ENCODE measurements at regions of chr17 and their contacts with region 1.

Region 1: GRCh38 chr17:38667099-38667786 is 7.5 kb downstream of the EPOP start:
- DNase-seq: peak; percentile 77 to 82 (median 78)
- ATAC-seq: peak; percentile 82
- H3K4me3 ChIP-seq: no peak overlapping the region
- H3K27ac ChIP-seq: no peak overlapping the region
- H3K4me1 ChIP-seq: peaks cover 0 to 7% of the 10 kb centered on the region in 2 experiments; a peak in 3 of 5 replicates
- H3K27me3 ChIP-seq: peaks cover 9 to 18% of the 10 kb centered on the region in 2 experiments; a peak in 4 of 5 replicates
- CTCF ChIP-seq: peak; percentile 96 to 100 (median 99)
- EP300 ChIP-seq: no peak
- POLR2A ChIP-seq: no peak
- RAD21 ChIP-seq: peak; percentile 90 to 95

Region 2: DNA sequence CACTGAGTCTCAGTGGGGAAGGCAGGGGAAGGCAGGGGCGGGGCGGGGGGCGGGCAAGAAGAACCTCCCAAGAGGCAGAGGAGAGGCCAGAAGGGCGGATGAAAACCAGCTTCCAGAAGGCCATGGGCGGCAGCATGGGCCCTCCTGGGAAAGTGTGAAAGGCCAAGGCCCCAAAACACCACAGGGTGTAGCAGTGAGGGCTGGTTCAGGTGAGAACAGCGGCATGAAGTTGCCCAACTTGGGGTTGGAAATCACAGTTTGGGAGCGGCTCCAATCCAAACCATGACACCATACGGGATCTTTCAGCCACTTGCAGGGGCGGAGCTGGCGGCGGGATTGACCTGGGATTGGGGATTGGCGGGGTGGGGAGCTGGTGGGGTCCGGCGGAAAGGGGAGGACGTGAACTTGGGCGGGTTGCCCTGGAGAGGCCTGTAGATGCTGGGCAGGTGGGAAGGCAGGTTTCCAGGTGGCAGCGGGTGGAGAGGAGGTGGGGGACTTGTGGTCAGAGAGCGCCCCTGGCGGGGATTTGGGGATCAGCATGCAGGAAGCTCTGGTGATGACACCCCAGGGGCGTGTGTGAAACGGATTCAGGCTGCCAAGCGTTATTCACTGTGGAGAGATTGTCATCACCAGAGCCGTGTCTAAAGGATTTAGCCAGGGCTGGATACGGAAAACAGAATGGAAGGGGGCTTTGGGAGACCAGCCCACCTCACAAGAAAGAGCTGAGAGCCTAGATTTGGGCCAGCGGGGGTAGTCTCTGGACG is 158.1 kb before region 1 on chr17:
- CTCF ChIA-PET with region 1: interaction called, 3 read pairs
- POLR2A ChIA-PET with region 1: no interaction called
- in situ Hi-C with region 1: loop called (anchors 5 kb)
- intact Hi-C with region 1: no loop called
- DNase-seq: peak; percentile 89 to 92 (median 92)
- ATAC-seq: peak; percentile 91
- H3K4me3 ChIP-seq: peak overlapping the region; percentile 9
- H3K27ac ChIP-seq: no peak overlapping the region
- H3K4me1 ChIP-seq: peaks cover 0 to 22% of the 10 kb centered on the region in 2 experiments; a peak in 2 of 5 replicates
- H3K27me3 ChIP-seq: peaks cover 3 to 39% of the 10 kb centered on the region in 2 experiments; a peak in 3 of 5 replicates
- CTCF ChIP-seq: peak; percentile 91 to 94 (median 92)
- EP300 ChIP-seq: peak; percentile 24; the same call in 1 of the 2 replicates
- POLR2A ChIP-seq: no peak
- RAD21 ChIP-seq: peak; percentile 38 to 61; a peak in 3 of 4 replicates

Region 3: GRCh38 chr17:38557836-38558727 is 109.2 kb before region 1 on chr17:
- CTCF ChIA-PET with region 1: interaction called, 10 read pairs
- POLR2A ChIA-PET with region 1: interaction called, 3 read pairs
- in situ Hi-C with region 1: loop called (anchors 5 kb)
- intact Hi-C with region 1: no loop called
- DNase-seq: peak; percentile 91 to 94 (median 92)
- ATAC-seq: peak; percentile 93
- H3K4me3 ChIP-seq: peak overlapping the region; percentile 37
- H3K27ac ChIP-seq: no peak overlapping the region
- H3K4me1 ChIP-seq: peaks cover 19 to 46% of the 10 kb centered on the region in 2 experiments
- H3K27me3 ChIP-seq: peaks cover 8 to 39% of the 10 kb centered on the region in 2 experiments; a peak in 4 of 5 replicates
- CTCF ChIP-seq: peak; percentile 92 to 95 (median 95)
- EP300 ChIP-seq: no peak
- POLR2A ChIP-seq: no peak
- RAD21 ChIP-seq: peak; percentile 53 to 87; a peak in 3 of 4 replicates